ENCODE measurements at regions of chr12 and their contacts with region 1.

Region 1: GRCh38 chr12:31749024-31749704 is 20.3 kb upstream of the AMN1 start:
- DNase-seq: peak; percentile 89
- H3K4me3 Mint-ChIP-seq: peak overlapping the region; percentile 52
- H3K27ac Mint-ChIP-seq: peak overlapping the region; percentile 98
- H3K4me1 Mint-ChIP-seq: peaks cover 70% of the 10 kb centered on the region
- H3K27me3 Mint-ChIP-seq: peaks cover 7% of the 10 kb centered on the region
- CTCF ChIP-seq: no peak

Region 2: GRCh38 chr12:31682136-31682962 is 66.8 kb before region 1 on chr12:
- CTCF ChIA-PET with region 1: interaction called, 4 read pairs
- intact Hi-C with region 1: loop called (anchors 5 kb)
- DNase-seq: peak; percentile 81
- H3K4me3 Mint-ChIP-seq: peak overlapping the region; percentile 2
- H3K27ac Mint-ChIP-seq: peak overlapping the region; percentile 54
- H3K4me1 Mint-ChIP-seq: peaks cover 10% of the 10 kb centered on the region
- H3K27me3 Mint-ChIP-seq: no peaks in the 10 kb centered on the region
- CTCF ChIP-seq: peak; percentile 84

Region 3: DNA sequence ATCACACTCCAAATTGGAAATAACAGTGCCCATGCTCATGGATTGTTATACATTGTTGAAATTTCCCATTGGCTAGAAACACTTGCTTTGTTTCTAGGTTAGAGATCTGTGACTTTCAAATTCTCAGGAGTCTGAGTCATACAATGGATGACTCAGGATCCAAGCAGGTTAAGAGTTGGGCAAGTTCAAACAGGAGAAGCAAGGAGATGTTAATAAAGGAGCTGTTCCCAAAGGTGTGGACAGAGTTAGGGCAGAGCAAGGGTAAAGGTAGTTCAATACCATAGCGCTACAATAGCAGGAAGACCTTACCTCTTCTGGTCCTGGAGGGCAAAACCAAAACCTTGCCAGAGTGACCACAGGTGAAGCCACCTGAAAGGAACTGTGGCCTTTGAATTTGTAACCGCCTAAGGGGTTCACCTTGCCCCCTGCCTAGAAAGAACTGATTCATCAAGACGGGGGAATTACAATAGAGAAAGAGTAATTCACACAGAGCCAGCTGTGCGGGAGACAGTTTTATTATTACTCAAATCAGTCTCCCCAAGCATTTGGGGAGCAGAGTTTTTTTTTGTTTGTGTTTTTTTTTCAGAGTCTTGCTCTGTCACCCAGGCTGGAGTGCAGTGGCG is 16.1 kb before region 1 on chr12:
- CTCF ChIA-PET with region 1: interaction called, 22 read pairs
- intact Hi-C with region 1: loop called (anchors 1 kb)
- DNase-seq: peak; percentile 68
- H3K4me3 Mint-ChIP-seq: peak overlapping the region; percentile 27
- H3K27ac Mint-ChIP-seq: peak overlapping the region; percentile 98
- H3K4me1 Mint-ChIP-seq: peaks cover 59% of the 10 kb centered on the region
- H3K27me3 Mint-ChIP-seq: no peaks in the 10 kb centered on the region
- CTCF ChIP-seq: no peak

Measured in Calu3 (cell line).